ENCODE measurements at regions of chr7 and their contacts with region 1.

Region 1: DNA sequence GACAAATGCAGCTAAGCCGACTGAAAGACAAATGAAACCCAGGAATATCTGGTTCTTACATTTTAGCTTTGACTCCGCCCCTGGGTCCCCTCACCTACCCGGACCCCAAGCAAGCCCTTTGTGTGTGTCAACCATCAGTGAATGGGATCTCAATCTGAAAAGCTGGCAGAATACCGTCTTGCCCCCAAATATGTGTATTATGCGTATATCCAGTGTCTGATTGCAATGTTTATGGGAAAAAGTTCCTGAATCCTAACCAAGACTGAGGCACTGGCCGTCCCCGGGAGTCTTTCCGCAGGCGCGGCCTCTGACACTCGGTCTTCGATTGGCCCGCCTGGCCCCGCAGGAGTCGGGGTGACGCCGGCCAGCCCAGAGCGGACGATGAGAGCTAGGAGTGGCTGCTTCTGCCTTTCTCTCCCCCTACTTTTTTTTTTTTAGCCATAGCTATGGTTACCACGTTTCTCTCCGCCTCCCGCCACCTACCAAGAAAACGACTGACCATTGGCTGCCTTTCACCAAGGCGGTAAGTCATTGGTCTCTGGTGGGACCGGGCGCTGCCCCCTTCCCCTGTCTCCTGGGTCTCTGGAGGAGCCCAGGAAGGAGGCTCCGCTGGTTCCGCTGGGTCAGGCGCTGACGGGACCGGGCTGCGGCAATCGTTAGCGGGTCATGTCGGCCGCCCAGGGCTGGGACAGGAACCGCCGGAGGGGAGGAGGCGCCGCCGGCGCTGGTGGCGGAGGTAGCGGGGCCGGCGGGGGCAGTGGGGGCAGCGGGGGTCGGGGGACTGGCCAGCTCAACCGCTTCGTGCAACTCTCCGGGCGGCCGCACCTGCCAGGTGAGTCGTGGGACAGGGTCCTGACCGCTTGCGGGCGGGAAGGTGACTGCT is at the start of gene KLHDC10:
- DNase-seq: peak; percentile 99
- ATAC-seq: peak; percentile 98 to 99
- H3K4me3 ChIP-seq: peak within 1 kb of the TSS; percentile 80
- H3K27ac ChIP-seq: peak within 1 kb of the TSS; percentile 81 to 91
- H3K4me1 ChIP-seq: peaks cover 18% of the 10 kb centered on the region
- CTCF ChIP-seq: no peak
- EP300 ChIP-seq: no peak
- POLR2A ChIP-seq: peak; percentile 50; the same call in 1 of the 2 replicates
- RAD21 ChIP-seq: no peak
- polyA plus RNA-seq, gene KLHDC10: 29.6 and 35.0 TPM in 2 replicates

Region 2: DNA sequence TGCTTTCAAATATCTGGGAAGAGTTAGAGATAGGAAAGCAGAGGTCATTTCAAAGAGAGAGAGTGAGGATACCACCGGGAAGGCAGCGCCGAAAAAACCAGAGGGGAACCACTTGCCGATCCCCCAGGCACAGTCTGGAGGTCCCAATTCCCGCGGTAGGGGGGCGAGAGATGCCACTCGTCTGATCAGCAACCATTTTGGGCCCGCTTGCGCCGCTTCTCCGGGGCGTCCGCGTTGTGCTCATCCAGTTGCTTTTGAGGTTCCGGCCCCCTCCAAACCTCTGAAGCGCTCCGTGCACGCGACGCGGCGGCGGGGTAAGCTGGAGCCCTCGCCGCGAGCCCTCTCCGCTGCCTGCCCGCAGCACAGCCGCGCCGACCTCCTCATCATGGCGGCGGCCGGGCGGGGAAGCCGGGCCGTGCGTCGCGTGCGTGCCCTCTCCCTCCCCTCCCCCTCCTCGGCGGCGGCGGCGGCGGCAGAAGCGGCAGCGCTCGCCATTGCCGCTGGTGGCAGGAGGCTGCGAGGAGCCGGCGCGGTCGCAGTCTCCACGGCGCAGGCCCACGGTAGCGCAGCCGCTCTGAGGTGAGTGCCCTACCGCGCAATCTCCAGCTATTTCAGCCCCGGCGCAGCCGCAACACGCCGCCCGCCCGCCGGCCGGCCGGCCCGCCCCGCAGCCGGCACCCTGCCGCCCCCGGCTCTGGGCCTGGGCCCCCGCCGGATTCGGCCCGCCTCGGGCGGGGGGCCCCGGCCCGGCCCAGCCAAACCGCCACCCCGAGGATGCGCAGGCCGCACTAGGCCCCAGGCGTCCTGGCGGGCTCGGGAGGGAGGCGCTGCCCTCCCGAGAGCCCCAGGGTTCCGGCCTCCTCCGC is 458.7 kb before region 1 on chr7 and contains the start of gene NRF1:
- CTCF ChIA-PET with region 1: no interaction called
- POLR2A ChIA-PET with region 1: no interaction called
- DNase-seq: peak; percentile 82 to 91
- ATAC-seq: peak; percentile 95
- H3K4me3 ChIP-seq: peak within 1 kb of the TSS; percentile 87
- H3K27ac ChIP-seq: peak within 1 kb of the TSS; percentile 94 to 95
- H3K4me1 ChIP-seq: peaks cover 39% of the 10 kb centered on the region
- CTCF ChIP-seq: no peak
- EP300 ChIP-seq: no peak
- POLR2A ChIP-seq: peak; percentile 92
- RAD21 ChIP-seq: no peak; a peak in 3 of 5 replicates
- polyA plus RNA-seq, gene NRF1: 18.5 and 26.6 TPM in 2 replicates

Region 3: GRCh38 chr7:130084037-130084875 is 14.0 kb after region 1 on chr7:
- CTCF ChIA-PET with region 1: interaction called, 35 read pairs
- POLR2A ChIA-PET with region 1: interaction called, 5 read pairs
- DNase-seq: peak; percentile 36 to 44
- ATAC-seq: peak; percentile 77 to 85; a peak in 5 of 6 replicates
- H3K4me3 ChIP-seq: no peak overlapping the region
- H3K27ac ChIP-seq: no peak overlapping the region
- H3K4me1 ChIP-seq: peaks cover 2% of the 10 kb centered on the region; the same call in 2 of the 3 replicates
- CTCF ChIP-seq: peak; percentile 51
- EP300 ChIP-seq: no peak
- POLR2A ChIP-seq: no peak
- RAD21 ChIP-seq: no peak

Region 4: DNA sequence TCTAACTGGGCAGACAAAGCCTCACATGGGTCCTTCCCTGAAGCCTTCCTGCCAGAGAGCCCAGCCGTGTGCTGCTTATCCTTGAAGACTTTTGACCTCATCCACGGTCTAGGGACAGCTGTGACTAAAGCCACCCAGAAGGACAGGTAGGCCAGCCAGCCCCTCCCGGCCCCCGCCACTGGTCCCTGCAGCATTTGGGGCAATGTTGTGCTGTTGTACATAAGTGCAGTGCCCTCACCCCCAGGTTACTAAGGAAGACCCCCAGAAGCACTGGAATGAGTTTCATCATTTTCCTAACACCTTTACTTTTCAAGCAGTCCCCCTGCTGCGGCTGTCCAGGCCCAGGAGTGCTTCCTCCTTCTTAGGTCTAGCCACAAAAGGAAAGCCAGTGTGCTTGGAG is 92.0 kb after region 1 on chr7:
- CTCF ChIA-PET with region 1: no interaction called
- POLR2A ChIA-PET with region 1: no interaction called
- DNase-seq: no peak
- ATAC-seq: no peak
- H3K4me3 ChIP-seq: no peak overlapping the region
- H3K27ac ChIP-seq: no peak overlapping the region
- H3K4me1 ChIP-seq: no peaks in the 10 kb centered on the region
- CTCF ChIP-seq: no peak
- EP300 ChIP-seq: no peak
- POLR2A ChIP-seq: no peak
- RAD21 ChIP-seq: no peak

Region 5: GRCh38 chr7:130205084-130205947 is 135.1 kb after region 1 on chr7 and contains the start of gene TMEM209:
- CTCF ChIA-PET with region 1: interaction called, 5 read pairs
- POLR2A ChIA-PET with region 1: interaction called, 12 read pairs
- DNase-seq: peak; percentile 86 to 97
- ATAC-seq: peak; percentile 96
- H3K4me3 ChIP-seq: peak within 1 kb of the TSS; percentile 88
- H3K27ac ChIP-seq: peak within 1 kb of the TSS; percentile 94 to 96
- H3K4me1 ChIP-seq: peaks cover 9% of the 10 kb centered on the region; the same call in 2 of the 3 replicates
- CTCF ChIP-seq: no peak
- EP300 ChIP-seq: no peak
- POLR2A ChIP-seq: peak; percentile 93
- RAD21 ChIP-seq: peak in 1 of 2 experiments; percentile 27; a peak in 1 of 5 replicates
- polyA plus RNA-seq, gene TMEM209: 33.9 and 36.6 TPM in 2 replicates

Region 6: DNA sequence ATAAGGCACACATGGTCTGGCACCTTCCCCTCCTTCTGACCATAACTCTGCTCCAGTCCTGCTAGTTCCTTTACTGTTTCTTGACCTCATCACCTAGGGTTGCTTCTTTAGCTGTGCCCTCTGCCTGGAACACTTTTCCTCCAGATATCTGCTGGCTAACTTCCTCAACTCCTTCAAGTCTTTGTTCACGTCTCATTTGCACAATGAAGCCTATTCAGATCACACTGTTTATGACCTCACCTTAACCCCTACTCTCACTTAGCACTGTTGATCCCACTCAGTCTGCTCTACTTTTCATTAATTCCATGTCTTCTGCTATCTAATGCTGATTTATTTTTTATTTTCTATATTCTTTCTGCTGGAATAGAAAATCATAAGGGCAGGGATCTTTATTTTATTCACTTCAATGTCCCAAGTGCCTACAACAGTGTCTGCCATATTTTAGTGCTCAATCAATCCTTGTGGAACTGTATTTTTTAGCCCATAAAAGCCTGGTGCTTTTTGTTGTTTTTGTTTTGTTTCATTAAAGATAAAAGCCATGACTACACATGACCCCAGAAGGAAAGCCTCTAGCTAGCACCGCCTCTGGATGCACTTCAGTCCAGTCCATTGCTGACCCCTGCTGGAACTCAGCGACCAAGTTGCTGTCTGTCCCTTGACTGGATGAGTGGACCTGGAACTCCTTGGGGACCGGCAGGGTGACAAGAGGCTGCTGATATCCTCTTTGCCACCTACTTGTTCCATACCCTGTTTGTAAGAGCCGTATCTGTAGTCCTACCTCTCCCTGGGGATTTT is 651.5 kb after region 1 on chr7:
- CTCF ChIA-PET with region 1: interaction called, 19 read pairs
- POLR2A ChIA-PET with region 1: no interaction called
- DNase-seq: peak; percentile 35 to 71
- ATAC-seq: peak; percentile 96 to 97
- H3K4me3 ChIP-seq: no peak overlapping the region
- H3K27ac ChIP-seq: no peak overlapping the region
- H3K4me1 ChIP-seq: no peaks in the 10 kb centered on the region
- CTCF ChIP-seq: peak; percentile 54
- EP300 ChIP-seq: no peak
- POLR2A ChIP-seq: no peak
- RAD21 ChIP-seq: peak; percentile 72 to 86

Region 7: GRCh38 chr7:130758429-130759056 is 688.3 kb after region 1 on chr7:
- CTCF ChIA-PET with region 1: interaction called, 38 read pairs
- POLR2A ChIA-PET with region 1: interaction called, 5 read pairs
- DNase-seq: peak; percentile 41 to 64
- ATAC-seq: peak; percentile 16 to 68; a peak in 4 of 6 replicates
- H3K4me3 ChIP-seq: no peak overlapping the region
- H3K27ac ChIP-seq: no peak overlapping the region
- H3K4me1 ChIP-seq: no peaks in the 10 kb centered on the region
- CTCF ChIP-seq: peak; percentile 89
- EP300 ChIP-seq: no peak
- POLR2A ChIP-seq: no peak
- RAD21 ChIP-seq: peak; percentile 76 to 82

Region 8: GRCh38 chr7:130831817-130832481 is 761.7 kb after region 1 on chr7:
- CTCF ChIA-PET with region 1: interaction called, 16 read pairs
- POLR2A ChIA-PET with region 1: no interaction called
- DNase-seq: peak; percentile 31 to 60
- ATAC-seq: no peak
- H3K4me3 ChIP-seq: no peak overlapping the region
- H3K27ac ChIP-seq: no peak overlapping the region
- H3K4me1 ChIP-seq: 0 out of 3 replicates have a peak, but pooled peaks cover 3% of the 10 kb centered on the region
- CTCF ChIP-seq: peak; percentile 89
- EP300 ChIP-seq: no peak
- POLR2A ChIP-seq: no peak
- RAD21 ChIP-seq: peak; percentile 88 to 89